IMR-90 (cell line): ENCODE measurements at regions of chr1 and their contacts with region 1.

Region 1: DNA sequence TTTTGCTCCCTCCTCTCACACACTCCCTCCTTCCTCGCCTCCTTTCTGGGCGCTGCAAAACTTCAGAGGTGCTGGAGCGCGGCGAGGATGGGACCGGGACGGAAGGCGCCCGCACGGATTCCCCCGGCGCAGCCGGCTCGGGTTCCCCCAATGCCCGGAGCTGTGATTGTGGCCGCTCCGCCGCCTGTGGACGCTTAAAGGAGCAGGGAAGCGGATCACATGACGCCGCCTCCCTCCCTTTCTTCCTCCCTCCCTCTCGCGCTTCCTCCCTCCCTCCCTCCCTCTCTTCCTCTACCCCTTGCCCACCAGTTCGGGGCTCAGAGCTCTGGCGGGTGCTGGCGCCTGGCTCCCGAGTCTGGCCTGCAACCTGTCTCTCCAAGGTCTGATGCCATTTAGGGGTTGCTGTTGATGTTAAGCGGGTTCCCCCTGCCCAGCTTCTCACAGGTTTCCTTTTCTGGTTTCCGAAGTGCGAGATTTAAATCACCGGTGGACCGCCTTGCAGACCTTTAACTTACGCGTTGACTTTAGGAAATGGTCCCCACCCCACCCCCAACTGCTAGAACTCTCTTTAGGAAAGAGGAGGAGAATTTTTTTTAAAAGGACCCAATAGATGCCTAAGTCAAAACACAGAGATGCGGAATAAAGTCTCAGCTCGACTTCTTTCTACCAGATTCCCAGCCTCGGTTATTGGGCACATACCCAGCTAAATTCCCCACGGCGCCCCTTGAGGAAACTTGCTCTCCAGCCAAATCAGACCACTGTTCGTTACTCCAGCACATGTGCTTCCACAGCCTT is at the start of gene WLS:
- DNase-seq: peak; percentile 80
- ATAC-seq: peak; percentile 78
- H3K4me3 ChIP-seq: peak within 1 kb of the TSS; percentile 82
- H3K27ac ChIP-seq: peak within 1 kb of the TSS; percentile 90
- H3K4me1 ChIP-seq: peaks cover 6% of the 10 kb centered on the region
- H3K27me3 ChIP-seq: peaks cover 1% of the 10 kb centered on the region; the same call in 1 of the 2 replicates
- CTCF ChIP-seq: 0 out of 2 replicates have a peak, but pooled peaks have one; percentile 7
- POLR2A ChIP-seq: peak; percentile 95
- RAD21 ChIP-seq: peak; percentile 34; the same call in 1 of the 2 replicates
- total RNA-seq, gene WLS: 139 and 157 TPM in 2 replicates

Region 2: GRCh38 chr1:68132426-68133130 is 100.0 kb before region 1 on chr1:
- CTCF ChIA-PET with region 1: interaction called, 4 read pairs
- POLR2A ChIA-PET with region 1: no interaction called
- dilution Hi-C with region 1: no loop called
- in situ Hi-C with region 1: loop called (anchors 5 kb)
- intact Hi-C with region 1: no loop called
- DNase-seq: no peak
- ATAC-seq: no peak
- H3K4me3 ChIP-seq: no peak overlapping the region
- H3K27ac ChIP-seq: no peak overlapping the region
- H3K4me1 ChIP-seq: peaks cover 5% of the 10 kb centered on the region; the same call in 1 of the 2 replicates
- H3K27me3 ChIP-seq: no peaks in the 10 kb centered on the region
- CTCF ChIP-seq: no peak
- POLR2A ChIP-seq: no peak
- RAD21 ChIP-seq: no peak

Region 3: DNA sequence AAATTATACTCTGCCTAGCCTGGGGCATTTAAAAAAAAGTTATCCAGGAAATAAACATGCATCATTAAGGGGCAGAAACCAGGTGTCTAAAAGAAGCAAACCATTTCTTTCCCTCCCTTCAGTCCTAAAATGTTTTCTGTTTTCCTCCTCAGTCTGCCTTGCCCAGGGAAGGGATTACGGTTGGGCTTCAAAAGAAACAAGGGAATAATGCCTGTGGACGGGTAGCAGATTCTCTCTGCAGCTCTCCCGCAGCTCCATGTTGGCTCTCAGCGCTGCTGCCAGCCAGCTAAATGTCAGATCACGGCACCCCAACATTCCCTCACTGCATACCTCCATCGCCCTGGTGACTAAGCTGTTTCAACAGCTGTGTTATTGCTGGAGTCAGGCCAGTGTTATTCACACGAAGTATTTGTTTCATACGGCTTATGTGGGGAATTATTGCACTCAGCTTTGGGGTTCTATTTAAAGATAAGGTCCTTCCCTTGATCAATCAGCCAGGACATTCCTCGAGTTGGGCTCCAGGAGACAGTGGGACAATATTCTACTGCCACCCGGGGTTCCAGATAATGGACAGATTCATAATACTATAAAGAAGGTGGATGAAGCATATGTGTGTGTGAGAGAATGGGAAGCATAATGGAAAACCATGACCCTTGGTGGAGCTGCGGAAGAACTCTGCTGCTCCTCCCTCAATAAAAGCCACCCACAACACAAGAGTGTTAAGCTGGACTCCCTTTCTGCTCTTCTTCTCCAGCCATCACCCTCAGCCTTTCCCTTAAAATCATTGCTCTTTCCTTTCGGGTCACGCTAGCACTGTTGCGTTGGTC is 58.4 kb before region 1 on chr1:
- CTCF ChIA-PET with region 1: no interaction called
- POLR2A ChIA-PET with region 1: interaction called, 3 read pairs
- dilution Hi-C with region 1: no loop called
- in situ Hi-C with region 1: no loop called
- intact Hi-C with region 1: loop called (anchors 1 kb)
- DNase-seq: peak; percentile 98
- ATAC-seq: peak; percentile 77
- H3K4me3 ChIP-seq: no peak overlapping the region
- H3K27ac ChIP-seq: peak overlapping the region; percentile 82
- H3K4me1 ChIP-seq: peaks cover 25% of the 10 kb centered on the region
- H3K27me3 ChIP-seq: no peaks in the 10 kb centered on the region
- CTCF ChIP-seq: no peak
- POLR2A ChIP-seq: no peak
- RAD21 ChIP-seq: no peak

Region 4: GRCh38 chr1:68291688-68292384 is 59.3 kb after region 1 on chr1:
- CTCF ChIA-PET with region 1: no interaction called
- POLR2A ChIA-PET with region 1: no interaction called
- dilution Hi-C with region 1: no loop called
- in situ Hi-C with region 1: no loop called
- intact Hi-C with region 1: no loop called
- DNase-seq: peak; percentile 42
- ATAC-seq: peak; percentile 32
- H3K4me3 ChIP-seq: no peak overlapping the region
- H3K27ac ChIP-seq: no peak overlapping the region
- H3K4me1 ChIP-seq: peaks cover 9% of the 10 kb centered on the region
- H3K27me3 ChIP-seq: no peaks in the 10 kb centered on the region
- CTCF ChIP-seq: no peak
- POLR2A ChIP-seq: no peak
- RAD21 ChIP-seq: no peak

Region 5: GRCh38 chr1:68326481-68326880 is 93.9 kb after region 1 on chr1:
- CTCF ChIA-PET with region 1: no interaction called
- POLR2A ChIA-PET with region 1: interaction called, 35 read pairs
- dilution Hi-C with region 1: no loop called
- in situ Hi-C with region 1: no loop called
- intact Hi-C with region 1: loop called (anchors 1 kb)
- DNase-seq: no peak
- ATAC-seq: no peak
- H3K4me3 ChIP-seq: no peak overlapping the region
- H3K27ac ChIP-seq: no peak overlapping the region
- H3K4me1 ChIP-seq: peaks cover 31% of the 10 kb centered on the region
- H3K27me3 ChIP-seq: no peaks in the 10 kb centered on the region
- CTCF ChIP-seq: no peak
- POLR2A ChIP-seq: no peak
- RAD21 ChIP-seq: no peak

Region 6: GRCh38 chr1:68442822-68443556 is 210.4 kb after region 1 on chr1:
- CTCF ChIA-PET with region 1: no interaction called
- POLR2A ChIA-PET with region 1: no interaction called
- dilution Hi-C with region 1: no loop called
- in situ Hi-C with region 1: no loop called
- intact Hi-C with region 1: loop called (anchors 10 kb)
- DNase-seq: peak; percentile 82
- ATAC-seq: peak; percentile 96
- H3K4me3 ChIP-seq: no peak overlapping the region
- H3K27ac ChIP-seq: no peak overlapping the region
- H3K4me1 ChIP-seq: no peaks in the 10 kb centered on the region
- H3K27me3 ChIP-seq: no peaks in the 10 kb centered on the region
- CTCF ChIP-seq: peak; percentile 74
- POLR2A ChIP-seq: no peak
- RAD21 ChIP-seq: peak; percentile 67